Activated naive CD4-positive, alpha-beta T cell treated with anti-CD3 and anti-CD28 coated beads for 36 hours (primary cell): ENCODE measurements at regions of chr15 and their contacts with region 1.

Region 1: GRCh38 chr15:39453500-39454073 is 127.3 kb upstream of the THBS1 start:
- DNase-seq: peak; percentile 30
- H3K4me3 Mint-ChIP-seq: no peak overlapping the region
- H3K27ac Mint-ChIP-seq: no peak overlapping the region
- H3K4me1 Mint-ChIP-seq: peaks cover 2% of the 10 kb centered on the region
- H3K27me3 Mint-ChIP-seq: peaks cover 3% of the 10 kb centered on the region

Region 2: GRCh38 chr15:39059917-39060316 is 393.7 kb before region 1 on chr15:
- CTCF ChIA-PET with region 1: no interaction called
- intact Hi-C with region 1: no loop called
- DNase-seq: no peak
- H3K4me3 Mint-ChIP-seq: no peak overlapping the region
- H3K27ac Mint-ChIP-seq: no peak overlapping the region
- H3K4me1 Mint-ChIP-seq: no peaks in the 10 kb centered on the region
- H3K27me3 Mint-ChIP-seq: peaks cover 4% of the 10 kb centered on the region

Region 3: DNA sequence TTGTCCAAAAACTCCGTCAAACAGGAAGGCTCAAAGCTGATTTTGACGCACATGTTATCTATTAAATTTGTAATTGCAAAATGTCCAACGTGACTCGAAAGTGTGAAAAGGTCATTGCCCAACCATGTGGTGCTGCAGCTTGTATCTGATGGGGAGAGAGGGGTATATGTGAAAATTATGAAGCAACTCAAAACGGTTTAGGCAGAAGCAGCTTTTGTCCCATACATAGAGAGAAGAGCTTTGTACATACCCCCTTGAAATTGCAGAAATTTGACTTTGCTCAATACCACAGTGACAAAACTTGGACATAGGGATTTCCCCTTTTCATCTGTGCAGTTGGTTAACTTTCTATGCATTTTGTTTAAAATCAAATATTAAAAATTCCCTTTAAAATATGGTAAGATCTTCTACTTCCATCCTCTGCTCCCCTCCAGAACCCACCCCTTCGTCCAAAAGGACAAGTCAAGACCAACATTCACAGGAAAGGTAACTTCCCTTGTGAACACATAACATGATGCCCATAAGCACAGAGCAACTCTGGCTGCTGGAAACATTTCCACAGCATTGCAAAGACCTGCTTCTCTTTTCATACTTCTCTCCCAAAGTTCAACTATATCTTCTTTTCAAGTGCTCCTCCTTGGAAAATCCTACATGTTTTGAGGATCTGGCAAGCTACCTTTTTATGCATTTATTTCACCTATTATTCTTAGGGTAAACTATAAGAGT is 126.4 kb before region 1 on chr15:
- CTCF ChIA-PET with region 1: no interaction called
- intact Hi-C with region 1: no loop called
- DNase-seq: no peak
- H3K4me3 Mint-ChIP-seq: no peak overlapping the region
- H3K27ac Mint-ChIP-seq: no peak overlapping the region
- H3K4me1 Mint-ChIP-seq: no peaks in the 10 kb centered on the region
- H3K27me3 Mint-ChIP-seq: no peaks in the 10 kb centered on the region

Region 4: GRCh38 chr15:39432912-39433348 is 20.7 kb before region 1 on chr15:
- CTCF ChIA-PET with region 1: no interaction called
- intact Hi-C with region 1: loop called (anchors 1 kb)
- DNase-seq: no peak
- H3K4me3 Mint-ChIP-seq: no peak overlapping the region
- H3K27ac Mint-ChIP-seq: no peak overlapping the region
- H3K4me1 Mint-ChIP-seq: peaks cover 23% of the 10 kb centered on the region
- H3K27me3 Mint-ChIP-seq: peaks cover 48% of the 10 kb centered on the region